Panc1 (cell line): ENCODE measurements at regions of chr6 and their contacts with region 1.

Region 1: DNA sequence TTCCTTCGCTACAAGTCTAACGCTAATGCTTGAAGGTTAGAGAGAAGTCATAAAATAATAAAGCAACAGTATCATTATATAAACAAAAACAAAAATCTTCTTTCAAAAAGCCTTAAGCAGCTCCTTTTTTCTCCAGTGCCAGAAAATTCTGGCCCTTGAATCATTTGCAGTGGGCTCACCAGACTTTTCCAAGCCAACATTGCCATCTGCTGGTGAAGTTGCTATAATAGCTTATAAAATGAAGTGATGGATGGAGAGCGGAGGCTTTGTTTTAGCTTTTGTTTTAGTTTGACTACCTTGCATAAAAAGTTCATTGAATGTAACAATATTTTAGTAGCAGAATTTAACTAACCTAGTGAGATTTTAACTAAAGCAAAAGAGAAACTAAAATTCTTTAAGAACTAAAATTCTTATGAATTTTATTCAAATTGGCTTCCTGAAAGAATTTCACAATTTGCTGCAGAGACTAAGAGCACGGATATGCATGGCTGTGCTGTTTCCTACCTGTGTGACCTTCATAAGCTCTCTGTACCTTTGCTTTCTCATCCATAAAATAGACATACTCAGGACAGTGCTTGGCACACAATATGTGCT is 44.8 kb upstream of the SLC2A12 start:
- DNase-seq: peak; percentile 52
- ATAC-seq: peak; percentile 92
- H3K4me3 ChIP-seq: no peak overlapping the region
- H3K27ac ChIP-seq: no peak overlapping the region
- H3K4me1 ChIP-seq: no peaks in the 10 kb centered on the region
- H3K27me3 ChIP-seq: no peaks in the 10 kb centered on the region
- CTCF ChIP-seq: peak; percentile 60

Region 2: DNA sequence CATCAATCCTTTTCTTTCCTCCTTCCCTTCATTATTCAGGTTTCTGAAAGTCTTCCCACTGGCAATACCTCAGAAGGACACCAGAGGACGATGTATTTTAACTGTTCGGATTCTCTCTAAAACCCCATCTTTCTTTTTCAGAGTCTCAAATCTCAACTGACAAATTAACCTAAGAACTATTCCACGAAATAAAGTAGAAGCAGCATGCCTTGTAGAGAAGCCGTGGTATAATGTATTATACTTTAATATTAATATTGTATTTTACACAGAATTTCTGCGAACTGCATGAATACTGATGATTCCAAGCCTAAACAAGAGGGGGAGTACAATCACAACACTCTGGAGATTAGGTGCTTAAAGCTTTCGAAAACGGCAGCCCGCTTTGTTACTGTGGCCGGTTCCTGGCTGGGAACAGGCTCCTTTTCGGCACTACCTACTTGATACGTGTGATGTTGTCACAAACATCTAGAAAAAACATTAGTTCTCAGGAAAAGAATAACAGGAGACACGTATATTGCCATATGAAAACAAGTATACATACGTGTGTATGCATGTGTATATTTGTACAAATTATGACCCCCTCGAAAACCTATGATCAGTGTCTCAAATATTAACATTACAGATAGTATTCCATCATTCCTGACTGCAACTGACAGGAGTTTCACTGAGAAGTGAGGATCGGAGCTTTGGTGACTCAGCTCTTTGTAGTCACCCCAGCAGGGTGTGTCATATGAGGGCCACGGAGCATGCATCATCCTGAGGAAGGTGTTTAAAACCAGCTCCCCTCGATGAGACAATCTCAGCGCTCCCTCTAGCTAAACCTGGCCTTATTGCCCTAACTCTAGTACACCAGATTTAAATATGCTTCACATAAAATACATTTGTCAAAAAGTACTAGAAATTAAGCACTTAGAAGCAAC is 528.0 kb before region 1 on chr6:
- CTCF ChIA-PET with region 1: no interaction called
- POLR2A ChIA-PET with region 1: no interaction called
- in situ Hi-C with region 1: no loop called
- intact Hi-C with region 1: loop called (anchors 2 kb)
- DNase-seq: peak; percentile 73
- ATAC-seq: peak; percentile 91
- H3K4me3 ChIP-seq: peak overlapping the region; percentile 27 to 57
- H3K27ac ChIP-seq: no peak overlapping the region
- H3K4me1 ChIP-seq: no peaks in the 10 kb centered on the region; the same call in 1 of the 2 replicates
- H3K27me3 ChIP-seq: 0 out of 2 replicates have a peak, but pooled peaks cover 2% of the 10 kb centered on the region
- CTCF ChIP-seq: peak; percentile 90

Region 3: GRCh38 chr6:133923938-133924593 is 173.1 kb before region 1 on chr6:
- CTCF ChIA-PET with region 1: interaction called, 78 read pairs
- POLR2A ChIA-PET with region 1: no interaction called
- in situ Hi-C with region 1: no loop called
- intact Hi-C with region 1: loop called (anchors 1 kb)
- DNase-seq: peak; percentile 73
- ATAC-seq: peak; percentile 98
- H3K4me3 ChIP-seq: no peak overlapping the region
- H3K27ac ChIP-seq: no peak overlapping the region
- H3K4me1 ChIP-seq: peaks cover 5% of the 10 kb centered on the region; the same call in 1 of the 2 replicates
- H3K27me3 ChIP-seq: no peaks in the 10 kb centered on the region
- CTCF ChIP-seq: peak; percentile 77

Region 4: GRCh38 chr6:133945158-133945557 is 152.1 kb before region 1 on chr6:
- CTCF ChIA-PET with region 1: interaction called, 13 read pairs
- POLR2A ChIA-PET with region 1: no interaction called
- in situ Hi-C with region 1: no loop called
- intact Hi-C with region 1: no loop called
- DNase-seq: no peak
- ATAC-seq: peak; percentile 42; the same call in 1 of the 2 replicates
- H3K4me3 ChIP-seq: no peak overlapping the region
- H3K27ac ChIP-seq: no peak overlapping the region
- H3K4me1 ChIP-seq: no peaks in the 10 kb centered on the region
- H3K27me3 ChIP-seq: no peaks in the 10 kb centered on the region
- CTCF ChIP-seq: no peak

Region 5: GRCh38 chr6:133973109-133973971 is 123.9 kb before region 1 on chr6:
- CTCF ChIA-PET with region 1: interaction called, 11 read pairs
- POLR2A ChIA-PET with region 1: no interaction called
- in situ Hi-C with region 1: no loop called
- intact Hi-C with region 1: loop called (anchors 2 kb)
- DNase-seq: no peak
- ATAC-seq: peak; percentile 72
- H3K4me3 ChIP-seq: no peak overlapping the region
- H3K27ac ChIP-seq: peak overlapping the region; percentile 23
- H3K4me1 ChIP-seq: peaks cover 33% of the 10 kb centered on the region
- H3K27me3 ChIP-seq: no peaks in the 10 kb centered on the region
- CTCF ChIP-seq: peak; percentile 73; the same call in 1 of the 2 replicates

Region 6: DNA sequence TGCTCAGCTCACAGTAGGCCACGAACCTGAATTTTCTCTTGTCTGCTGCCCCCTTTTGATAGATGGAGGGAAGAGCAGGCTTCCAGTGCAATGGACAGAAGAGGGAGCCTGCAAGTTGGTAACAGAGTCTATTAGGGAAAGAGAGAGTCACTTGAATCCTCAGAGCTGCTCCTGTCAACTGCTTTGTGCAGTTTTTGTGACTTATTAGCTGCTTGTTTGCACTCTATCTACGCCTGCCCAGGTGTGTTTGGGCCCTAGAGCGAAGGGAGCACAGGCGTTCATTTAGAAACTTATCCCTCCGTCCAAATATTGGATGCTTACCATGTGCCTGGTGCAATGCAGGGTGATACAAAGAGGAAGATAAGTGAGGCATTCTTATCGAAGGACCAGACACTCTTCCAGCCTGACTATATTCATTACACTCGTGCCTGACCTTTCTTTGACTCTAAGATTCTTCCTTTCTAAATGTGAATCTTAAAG is 33.2 kb before region 1 on chr6:
- CTCF ChIA-PET with region 1: interaction called, 20 read pairs
- POLR2A ChIA-PET with region 1: no interaction called
- in situ Hi-C with region 1: no loop called
- intact Hi-C with region 1: no loop called
- DNase-seq: no peak
- ATAC-seq: peak; percentile 90
- H3K4me3 ChIP-seq: no peak overlapping the region
- H3K27ac ChIP-seq: peak overlapping the region; percentile 68
- H3K4me1 ChIP-seq: peaks cover 36% of the 10 kb centered on the region
- H3K27me3 ChIP-seq: no peaks in the 10 kb centered on the region
- CTCF ChIP-seq: peak; percentile 92